B cell (primary cell): ENCODE measurements at regions of chr14 and their contacts with region 1.

Region 1: DNA sequence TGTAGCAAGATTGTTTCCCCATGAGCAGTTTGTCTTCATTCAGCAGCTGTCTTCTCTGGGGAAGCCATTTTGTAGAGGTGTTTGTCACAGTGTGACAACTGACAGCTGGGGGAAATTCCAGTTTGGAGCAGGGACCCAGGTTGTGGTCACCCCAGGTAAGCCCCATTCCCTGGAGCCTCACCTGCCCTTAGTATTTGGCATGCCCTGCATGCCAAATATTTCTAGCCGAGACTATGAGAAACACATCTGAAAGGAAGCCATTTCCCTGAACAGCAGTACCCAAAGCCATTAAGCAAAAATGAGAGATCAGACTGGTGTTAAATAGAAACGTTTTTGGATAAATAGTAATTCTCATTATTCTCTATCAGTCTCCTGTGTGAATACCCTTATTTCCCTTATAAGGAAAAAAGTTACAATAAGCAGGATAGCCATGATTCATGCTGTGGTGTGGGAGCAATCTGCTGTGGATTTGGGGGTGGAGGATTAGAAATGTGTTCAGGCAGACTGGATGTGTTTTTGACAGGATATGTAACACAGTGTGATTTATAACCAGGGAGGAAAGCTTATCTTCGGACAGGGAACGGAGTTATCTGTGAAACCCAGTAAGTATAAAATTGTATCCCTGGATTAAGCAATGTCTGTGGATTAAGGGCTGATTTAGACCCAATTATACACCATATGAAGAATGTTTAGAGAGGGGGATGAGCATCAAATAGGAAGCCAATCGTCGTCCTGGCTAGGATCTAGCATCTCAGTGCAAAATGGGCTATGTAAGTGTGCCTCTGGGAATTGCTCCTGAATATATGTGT is 68.9 kb downstream of the DAD1 start:
- DNase-seq: no peak
- ATAC-seq: no peak
- H3K4me3 ChIP-seq: peak overlapping the region in 1 of 5 experiments; percentile 6
- H3K4me3 Mint-ChIP-seq: peak overlapping the region; percentile 55
- H3K27ac ChIP-seq: peak overlapping the region; percentile 56 to 68
- H3K27ac Mint-ChIP-seq: peak overlapping the region; percentile 91
- H3K4me1 ChIP-seq: peaks cover 64 to 91% of the 10 kb centered on the region in 2 donors
- H3K4me1 Mint-ChIP-seq: peaks cover 90% of the 10 kb centered on the region
- H3K27me3 ChIP-seq: no peaks in the 10 kb centered on the region
- H3K27me3 Mint-ChIP-seq: no peaks in the 10 kb centered on the region
- CTCF ChIP-seq: no peak

Region 2: GRCh38 chr14:22448905-22449599 is 71.0 kb before region 1 on chr14:
- CTCF ChIA-PET with region 1: no interaction called
- POLR2A ChIA-PET with region 1: no interaction called
- intact Hi-C with region 1: no loop called
- DNase-seq: no peak
- ATAC-seq: peak; percentile 16
- H3K4me3 ChIP-seq: no peak overlapping the region
- H3K4me3 Mint-ChIP-seq: no peak overlapping the region
- H3K27ac ChIP-seq: peak overlapping the region in 1 of 2 donors; percentile 47
- H3K27ac Mint-ChIP-seq: peak overlapping the region; percentile 88
- H3K4me1 ChIP-seq: peaks cover 15 to 17% of the 10 kb centered on the region in 2 donors
- H3K4me1 Mint-ChIP-seq: peaks cover 23% of the 10 kb centered on the region
- H3K27me3 ChIP-seq: no peaks in the 10 kb centered on the region
- H3K27me3 Mint-ChIP-seq: no peaks in the 10 kb centered on the region
- CTCF ChIP-seq: no peak

Region 3: DNA sequence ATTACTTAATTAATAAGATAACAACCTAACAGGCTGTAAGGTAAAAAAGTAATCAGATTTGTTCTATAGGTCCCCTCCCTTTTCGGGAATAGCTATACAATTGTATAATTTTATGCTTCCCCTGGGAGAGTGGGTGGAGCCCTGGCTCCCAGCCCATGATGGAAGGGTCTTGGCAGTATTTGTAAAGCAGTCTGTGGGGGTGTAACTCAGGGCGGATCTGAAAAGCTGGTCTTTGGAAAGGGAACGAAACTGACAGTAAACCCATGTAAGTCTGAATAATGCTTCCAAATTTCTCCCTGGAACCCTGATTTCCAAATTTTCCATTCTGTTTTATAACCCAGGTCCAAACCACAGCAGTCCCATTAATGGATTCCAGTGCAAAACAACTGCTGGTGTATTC is 41.4 kb before region 1 on chr14:
- CTCF ChIA-PET with region 1: interaction called, 11 read pairs
- POLR2A ChIA-PET with region 1: interaction called, 4 read pairs
- intact Hi-C with region 1: loop called (anchors 5 kb)
- DNase-seq: no peak
- ATAC-seq: no peak
- H3K4me3 ChIP-seq: no peak overlapping the region
- H3K4me3 Mint-ChIP-seq: peak overlapping the region; percentile 83
- H3K27ac ChIP-seq: peak overlapping the region; percentile 3 to 51
- H3K27ac Mint-ChIP-seq: peak overlapping the region; percentile 79
- H3K4me1 ChIP-seq: peaks cover 85 to 94% of the 10 kb centered on the region in 2 donors
- H3K4me1 Mint-ChIP-seq: peaks cover 95% of the 10 kb centered on the region
- H3K27me3 ChIP-seq: no peaks in the 10 kb centered on the region
- H3K27me3 Mint-ChIP-seq: no peaks in the 10 kb centered on the region
- CTCF ChIP-seq: no peak

Region 4: GRCh38 chr14:22483863-22484593 is 36.1 kb before region 1 on chr14:
- CTCF ChIA-PET with region 1: interaction called, 11 read pairs
- POLR2A ChIA-PET with region 1: interaction called, 4 read pairs
- intact Hi-C with region 1: loop called (anchors 5 kb)
- DNase-seq: no peak
- ATAC-seq: peak; percentile 29
- H3K4me3 ChIP-seq: peak overlapping the region in 1 of 5 experiments; percentile 15
- H3K4me3 Mint-ChIP-seq: peak overlapping the region; percentile 81
- H3K27ac ChIP-seq: peak overlapping the region; percentile 8 to 26
- H3K27ac Mint-ChIP-seq: peak overlapping the region; percentile 91
- H3K4me1 ChIP-seq: peaks cover 59 to 79% of the 10 kb centered on the region in 2 donors
- H3K4me1 Mint-ChIP-seq: peaks cover 91% of the 10 kb centered on the region
- H3K27me3 ChIP-seq: no peaks in the 10 kb centered on the region
- H3K27me3 Mint-ChIP-seq: no peaks in the 10 kb centered on the region
- CTCF ChIP-seq: no peak

Region 5: DNA sequence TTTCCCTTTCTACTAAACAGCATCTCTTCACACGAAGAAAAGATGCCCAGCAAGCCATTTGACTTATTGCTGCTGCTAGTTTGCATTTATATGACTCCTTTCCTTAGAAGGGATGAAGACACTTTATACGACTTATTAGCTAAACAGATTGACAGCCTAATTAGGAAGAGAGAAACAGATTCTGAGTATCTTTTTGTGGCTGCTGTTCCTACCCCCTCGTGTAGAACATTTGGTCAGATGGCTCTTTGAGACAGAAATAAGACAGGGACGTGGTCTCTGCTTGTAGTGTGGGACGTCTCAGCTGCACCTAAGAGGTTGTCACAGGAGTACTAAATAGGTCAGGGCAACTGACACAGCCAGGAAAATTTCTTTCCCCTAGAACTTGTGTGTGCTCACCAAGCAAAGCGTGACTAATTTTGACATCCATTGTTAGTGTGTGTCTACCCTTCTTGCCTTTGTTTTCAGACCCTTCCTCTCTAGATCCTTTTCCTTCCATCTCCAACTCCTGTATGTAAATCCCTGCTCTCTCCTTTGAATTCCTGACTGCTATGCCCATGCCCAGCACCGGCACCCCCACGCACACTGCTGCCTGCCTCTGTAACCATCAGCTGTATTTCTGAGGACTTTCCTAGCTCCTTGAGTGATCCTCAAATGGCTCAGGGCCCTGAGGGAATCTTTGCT is 14.2 kb before region 1 on chr14:
- CTCF ChIA-PET with region 1: interaction called, 4 read pairs
- POLR2A ChIA-PET with region 1: interaction called, 3 read pairs
- intact Hi-C with region 1: loop called (anchors 2 kb)
- DNase-seq: no peak
- ATAC-seq: peak; percentile 29
- H3K4me3 ChIP-seq: peak overlapping the region in 1 of 5 experiments; percentile 6
- H3K4me3 Mint-ChIP-seq: peak overlapping the region; percentile 74
- H3K27ac ChIP-seq: peak overlapping the region; percentile 38 to 52
- H3K27ac Mint-ChIP-seq: peak overlapping the region; percentile 97
- H3K4me1 ChIP-seq: peaks cover 42 to 58% of the 10 kb centered on the region in 2 donors
- H3K4me1 Mint-ChIP-seq: peaks cover 77% of the 10 kb centered on the region
- H3K27me3 ChIP-seq: no peaks in the 10 kb centered on the region
- H3K27me3 Mint-ChIP-seq: no peaks in the 10 kb centered on the region
- CTCF ChIP-seq: no peak

Region 6: DNA sequence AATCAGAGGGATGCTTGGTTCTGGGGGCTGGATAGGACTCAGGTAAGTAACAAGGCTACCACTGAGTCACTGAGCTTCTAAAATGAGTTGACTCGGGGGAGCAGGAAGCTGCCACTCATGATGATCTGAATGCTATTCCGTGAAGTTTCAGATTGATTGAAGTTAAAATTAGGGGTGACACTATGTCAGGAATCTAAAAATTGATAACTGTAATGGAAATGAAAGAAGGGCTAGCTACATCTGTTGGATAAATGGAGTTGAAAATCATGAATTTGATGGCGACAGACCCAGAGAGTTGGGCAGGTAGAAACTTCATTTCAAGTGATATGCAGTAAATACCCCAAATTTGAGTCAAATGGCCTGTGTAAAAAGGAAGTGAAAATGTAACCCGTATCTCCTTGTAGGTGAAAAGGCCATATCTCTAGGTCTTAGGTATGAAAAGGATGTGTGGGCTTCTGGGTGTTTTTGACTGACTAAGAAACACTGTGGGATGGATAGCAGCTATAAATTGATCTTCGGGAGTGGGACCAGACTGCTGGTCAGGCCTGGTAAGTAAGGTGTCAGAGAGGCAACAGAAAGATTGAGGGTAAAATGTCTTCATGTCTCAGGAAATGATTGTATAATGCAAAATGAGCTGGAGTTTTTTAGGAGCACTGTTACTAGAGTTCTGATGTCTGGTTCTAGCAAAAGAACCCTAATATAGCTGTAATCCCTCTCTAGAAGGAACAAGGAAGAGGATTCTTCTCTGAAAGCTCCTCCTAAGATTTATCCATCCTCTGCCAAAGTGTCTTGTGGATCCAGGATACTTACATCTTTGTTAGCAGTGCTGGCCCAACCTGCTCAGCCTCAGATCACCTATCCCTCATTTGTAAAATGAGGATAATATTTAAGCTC is 11.6 kb after region 1 on chr14:
- CTCF ChIA-PET with region 1: interaction called, 12 read pairs
- POLR2A ChIA-PET with region 1: interaction called, 5 read pairs
- intact Hi-C with region 1: loop called (anchors 1 kb)
- DNase-seq: peak; percentile 79
- ATAC-seq: peak; percentile 79
- H3K4me3 ChIP-seq: peak overlapping the region; percentile 23 to 51 (median 32)
- H3K4me3 Mint-ChIP-seq: peak overlapping the region; percentile 79
- H3K27ac ChIP-seq: peak overlapping the region; percentile 89 to 90
- H3K27ac Mint-ChIP-seq: peak overlapping the region; percentile 93
- H3K4me1 ChIP-seq: peaks cover 49 to 63% of the 10 kb centered on the region in 2 donors
- H3K4me1 Mint-ChIP-seq: peaks cover 86% of the 10 kb centered on the region
- H3K27me3 ChIP-seq: no peaks in the 10 kb centered on the region
- H3K27me3 Mint-ChIP-seq: no peaks in the 10 kb centered on the region
- CTCF ChIP-seq: no peak

Region 7: GRCh38 chr14:22536853-22537338 is 16.8 kb after region 1 on chr14:
- CTCF ChIA-PET with region 1: interaction called, 12 read pairs
- POLR2A ChIA-PET with region 1: interaction called, 4 read pairs
- intact Hi-C with region 1: no loop called
- DNase-seq: no peak
- ATAC-seq: peak; percentile 96
- H3K4me3 ChIP-seq: no peak overlapping the region
- H3K4me3 Mint-ChIP-seq: peak overlapping the region; percentile 54
- H3K27ac ChIP-seq: no peak overlapping the region
- H3K27ac Mint-ChIP-seq: peak overlapping the region; percentile 81
- H3K4me1 ChIP-seq: peaks cover 34 to 43% of the 10 kb centered on the region in 2 donors
- H3K4me1 Mint-ChIP-seq: peaks cover 77% of the 10 kb centered on the region
- H3K27me3 ChIP-seq: no peaks in the 10 kb centered on the region
- H3K27me3 Mint-ChIP-seq: no peaks in the 10 kb centered on the region
- CTCF ChIP-seq: no peak